ENCODE measurements at regions of chr1 and their contacts with region 1.

Region 1: DNA sequence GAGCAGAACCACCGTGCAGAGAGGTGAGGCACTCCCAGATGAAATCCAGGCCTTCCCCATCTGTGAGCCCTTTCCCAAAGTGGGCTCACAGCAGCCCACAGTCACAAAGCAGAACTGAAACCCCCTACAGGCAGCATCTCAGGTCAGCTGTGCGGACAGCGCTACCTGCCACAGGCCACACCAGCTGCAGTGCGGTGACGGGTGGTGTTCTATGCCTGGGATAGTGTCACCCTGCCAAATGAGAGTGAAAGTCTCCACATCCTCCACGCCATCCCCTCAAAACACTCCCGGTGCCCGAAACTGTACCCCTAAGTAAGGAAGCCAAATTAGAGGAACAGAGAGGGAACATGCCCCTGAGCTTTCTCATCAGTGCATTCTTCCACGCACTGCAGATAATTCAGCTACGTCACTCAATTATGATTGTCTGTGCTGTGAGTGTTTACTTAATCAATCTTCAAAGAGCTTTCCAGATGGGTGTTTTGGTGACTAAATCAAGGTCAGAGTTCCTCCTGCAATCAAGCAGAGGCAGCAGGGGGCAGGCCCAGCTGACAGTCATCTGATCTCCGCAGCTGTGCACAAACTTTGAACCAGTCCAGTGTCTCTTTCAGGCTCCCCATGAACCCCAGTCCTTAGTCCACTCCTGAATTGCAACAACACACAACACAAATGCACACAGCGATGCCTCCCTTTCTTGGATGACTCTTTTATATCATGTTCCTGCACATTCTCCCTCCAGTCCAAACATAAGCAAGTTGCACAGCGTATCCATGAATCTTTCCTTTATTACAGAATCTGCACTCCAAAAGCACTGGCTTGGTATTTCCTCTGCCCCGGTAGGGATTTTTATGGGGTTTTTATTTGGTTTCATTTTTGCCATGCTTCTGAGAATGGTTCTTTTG is 150.0 kb downstream of the TOMM20 start:
- DNase-seq: peak; percentile 54 to 77
- ATAC-seq: peak in 2 of 4 donors; percentile 15 to 39
- H3K4me3 ChIP-seq: no peak overlapping the region
- H3K27ac ChIP-seq: peak overlapping the region; percentile 86
- H3K4me1 ChIP-seq: peaks cover 63% of the 10 kb centered on the region
- H3K27me3 ChIP-seq: no peaks in the 10 kb centered on the region
- CTCF ChIP-seq: no peak

Region 2: DNA sequence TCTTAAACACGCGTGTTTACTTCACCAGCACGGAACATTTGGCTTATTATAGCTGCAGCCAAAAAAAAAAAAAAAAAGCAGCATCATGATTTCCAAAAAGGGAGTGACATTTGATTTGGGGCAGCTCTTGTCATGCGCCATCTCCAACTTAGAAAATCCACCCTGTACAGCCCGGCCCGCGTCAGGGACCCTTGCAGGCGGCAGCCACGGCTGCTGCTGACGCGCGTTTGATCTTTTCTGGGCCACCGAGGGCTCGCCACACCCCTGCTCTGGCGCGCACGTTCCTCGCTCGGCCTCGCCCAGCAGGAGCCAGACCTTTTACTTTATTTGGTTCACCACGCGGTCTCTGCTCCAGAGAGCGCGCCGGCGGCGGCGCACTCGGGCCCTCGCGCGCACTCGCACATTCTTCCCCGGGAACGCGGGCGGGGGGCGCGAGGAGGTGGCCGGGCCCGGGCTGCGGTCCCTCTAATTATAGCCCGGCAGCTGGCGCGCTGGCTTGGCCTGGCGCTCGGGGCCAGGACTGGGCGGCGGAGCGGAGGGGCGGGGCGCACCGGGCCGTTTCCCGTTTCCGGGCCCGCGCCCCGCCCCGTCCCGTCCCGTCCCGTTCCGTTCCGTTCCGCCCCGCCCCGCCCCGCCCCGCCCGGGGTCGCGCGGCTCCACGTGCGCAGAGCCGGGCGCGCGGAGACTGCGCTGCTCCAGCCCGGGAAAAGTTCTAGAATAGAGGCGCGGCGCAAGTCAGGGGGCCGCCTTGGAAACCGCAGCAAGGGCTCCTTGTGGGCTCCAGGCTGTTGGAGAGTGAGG is 378.8 kb before region 1 on chr1:
- intact Hi-C with region 1: loop called in 1 of 2 experiments (anchors 10 kb)
- DNase-seq: peak; percentile 91 to 96
- ATAC-seq: peak; percentile 85 to 93 (median 88)
- H3K4me3 ChIP-seq: peak overlapping the region; percentile 67
- H3K27ac ChIP-seq: peak overlapping the region; percentile 99
- H3K4me1 ChIP-seq: peaks cover 49% of the 10 kb centered on the region
- H3K27me3 ChIP-seq: no peaks in the 10 kb centered on the region
- CTCF ChIP-seq: no peak

Region 3: DNA sequence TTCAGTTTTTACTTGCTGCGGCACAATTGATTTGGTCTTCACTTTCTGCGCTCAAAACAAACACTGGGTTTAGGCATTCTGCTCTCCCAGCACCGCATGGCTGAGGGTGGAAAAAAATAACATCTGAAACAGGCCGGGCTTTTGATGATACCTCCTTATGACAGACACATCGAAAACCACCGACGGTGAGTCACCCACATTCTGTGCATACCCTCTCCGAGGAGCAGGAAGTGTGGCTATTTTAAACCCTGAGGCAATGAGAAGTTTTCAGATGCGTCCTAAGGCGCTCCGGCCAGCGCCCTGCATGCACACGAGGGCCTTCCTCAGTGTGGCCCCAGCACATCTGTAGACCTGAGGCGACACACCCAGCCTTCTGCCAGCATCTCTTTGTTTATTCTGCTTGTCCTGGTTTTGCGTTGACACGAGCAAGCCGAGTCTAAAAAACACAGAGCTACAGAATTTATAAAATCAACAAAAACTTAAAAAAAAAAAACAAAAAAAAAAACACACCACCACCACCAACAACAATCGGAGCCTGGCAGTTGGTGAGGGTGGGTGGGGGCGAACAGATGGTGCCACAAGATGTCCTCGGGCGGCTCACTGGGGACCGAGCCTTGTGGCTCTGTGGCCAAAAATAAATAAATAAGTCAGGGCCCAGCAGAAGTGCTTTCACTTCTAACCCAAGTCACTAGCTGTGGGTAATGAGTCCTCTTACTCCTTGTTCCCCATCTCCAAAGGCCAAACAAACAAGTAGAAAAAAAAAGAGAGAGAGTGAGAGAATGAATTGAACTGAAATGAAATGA is 206.1 kb before region 1 on chr1:
- intact Hi-C with region 1: loop called in 1 of 2 experiments (anchors 5 kb)
- DNase-seq: peak; percentile 75 to 87
- ATAC-seq: peak; percentile 98 to 99 (median 98)
- H3K4me3 ChIP-seq: peak overlapping the region; percentile 16
- H3K27ac ChIP-seq: peak overlapping the region; percentile 82
- H3K4me1 ChIP-seq: peaks cover 18% of the 10 kb centered on the region
- H3K27me3 ChIP-seq: peaks cover 0 to 13% (median 3%) of the 10 kb centered on the region in 3 donors
- CTCF ChIP-seq: no peak